Calu3 (cell line): ENCODE measurements at regions of chr20 and their contacts with region 1.

Region 1: DNA sequence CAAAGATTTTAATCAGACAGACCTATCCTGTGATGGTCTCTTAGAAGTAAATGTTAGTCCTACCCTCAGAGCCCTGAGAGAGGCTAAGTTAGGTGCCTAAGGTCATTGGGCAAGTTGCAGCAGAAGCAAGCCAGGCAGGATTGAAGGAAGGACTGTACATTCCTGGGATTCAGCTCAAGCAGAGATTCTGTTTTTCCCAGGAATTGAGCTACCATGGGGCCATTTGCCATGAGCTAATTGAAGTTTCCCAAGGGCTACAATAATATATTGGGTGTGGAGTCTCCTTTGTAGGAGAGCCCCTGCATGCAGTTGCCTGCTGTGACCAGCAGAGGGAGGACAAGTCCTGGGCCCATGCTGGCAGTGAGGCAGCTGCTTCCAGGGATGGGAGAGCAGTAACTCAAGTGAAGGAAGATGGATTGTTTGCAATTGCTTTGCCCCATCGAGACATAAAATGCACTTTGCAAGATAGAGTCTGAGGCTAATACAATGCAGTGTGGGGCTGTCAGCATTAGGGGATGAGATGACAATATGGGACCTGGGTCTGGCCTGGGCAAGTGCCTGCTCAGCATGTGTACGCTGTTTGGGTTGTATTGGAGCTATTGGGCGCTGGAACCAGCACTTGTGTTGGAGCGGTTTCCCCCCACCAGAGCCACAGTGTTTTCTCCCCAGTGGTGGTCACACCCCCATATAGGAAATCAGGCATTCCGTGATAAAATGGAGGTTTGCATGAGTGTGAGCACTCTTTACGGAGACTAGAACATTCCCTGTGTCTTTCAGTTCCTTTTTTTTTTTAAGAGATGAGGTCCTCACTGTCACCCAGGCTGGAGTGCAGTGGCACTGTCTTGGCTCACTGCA is 27.9 kb downstream of the DNMT3B start:
- DNase-seq: peak; percentile 90
- H3K4me3 Mint-ChIP-seq: no peak overlapping the region
- H3K27ac Mint-ChIP-seq: no peak overlapping the region
- H3K4me1 Mint-ChIP-seq: peaks cover 8% of the 10 kb centered on the region
- H3K27me3 Mint-ChIP-seq: no peaks in the 10 kb centered on the region
- CTCF ChIP-seq: peak; percentile 100

Region 2: DNA sequence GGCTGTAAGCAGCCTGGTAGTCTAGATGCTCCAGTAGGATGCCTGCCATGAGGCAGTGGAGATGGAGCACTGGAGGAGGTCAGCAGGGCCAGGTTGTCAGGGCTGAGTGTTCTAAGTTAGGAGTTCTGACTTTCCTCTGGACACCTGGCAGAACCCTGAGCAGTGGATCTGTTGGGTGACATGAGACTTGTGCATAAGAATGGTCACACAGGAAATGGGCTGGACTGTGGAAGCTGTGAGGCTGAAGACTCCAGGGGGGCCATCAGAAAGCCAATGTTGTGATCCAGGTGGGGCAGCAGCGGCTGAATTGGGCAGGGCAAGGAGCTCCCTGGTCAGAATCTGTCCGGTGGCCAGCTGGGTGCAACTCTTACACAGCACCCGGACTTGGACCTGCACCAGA is 92.5 kb before region 1 on chr20:
- CTCF ChIA-PET with region 1: interaction called, 12 read pairs
- intact Hi-C with region 1: no loop called
- DNase-seq: no peak
- H3K4me3 Mint-ChIP-seq: no peak overlapping the region
- H3K27ac Mint-ChIP-seq: no peak overlapping the region
- H3K4me1 Mint-ChIP-seq: no peaks in the 10 kb centered on the region
- H3K27me3 Mint-ChIP-seq: no peaks in the 10 kb centered on the region
- CTCF ChIP-seq: no peak

Region 3: DNA sequence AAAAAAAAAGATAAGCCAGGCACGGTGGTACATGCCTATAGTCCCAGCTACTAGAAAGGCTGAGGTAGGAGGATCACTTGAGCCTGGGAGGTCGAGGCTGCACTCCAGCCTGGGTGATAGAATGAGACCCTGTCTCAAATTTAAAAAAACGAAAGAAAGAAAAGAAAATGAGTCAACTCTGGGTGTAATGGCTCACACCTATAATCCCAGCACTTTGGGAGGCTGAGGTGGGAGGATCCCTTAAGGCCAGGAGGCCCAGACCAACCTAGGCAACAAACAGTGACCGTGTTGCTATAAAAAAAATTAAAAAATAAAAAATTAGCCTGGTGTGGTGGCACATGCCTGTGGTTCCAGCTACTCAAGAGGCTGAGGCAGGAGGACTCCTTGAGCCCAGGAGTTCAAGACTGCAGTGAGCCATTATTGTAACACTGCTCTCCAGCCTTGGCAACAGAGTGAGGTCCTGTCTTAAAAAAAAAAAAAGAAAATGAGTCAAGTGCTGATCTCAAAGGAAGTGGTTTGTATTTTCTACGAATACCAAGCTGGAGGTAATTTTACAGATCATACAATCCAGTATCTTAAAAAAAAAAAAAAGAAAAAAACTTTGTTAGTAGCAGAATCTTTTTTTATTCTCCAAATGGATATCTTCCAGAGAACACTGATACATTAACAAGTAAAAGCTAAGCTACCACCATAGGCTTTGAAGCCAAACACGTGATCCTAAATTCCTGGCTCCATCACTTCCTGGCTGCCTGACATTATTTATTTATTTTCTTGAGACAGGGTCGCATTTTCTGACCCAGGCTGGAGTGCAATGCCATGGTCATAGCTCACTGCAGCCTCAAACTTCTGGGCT is 52.5 kb before region 1 on chr20:
- CTCF ChIA-PET with region 1: no interaction called
- intact Hi-C with region 1: no loop called
- DNase-seq: no peak
- H3K4me3 Mint-ChIP-seq: no peak overlapping the region
- H3K27ac Mint-ChIP-seq: no peak overlapping the region
- H3K4me1 Mint-ChIP-seq: peaks cover 8% of the 10 kb centered on the region
- H3K27me3 Mint-ChIP-seq: no peaks in the 10 kb centered on the region
- CTCF ChIP-seq: no peak

Region 4: GRCh38 chr20:32819992-32820710 is 30.0 kb after region 1 on chr20:
- CTCF ChIA-PET with region 1: interaction called, 19 read pairs
- intact Hi-C with region 1: loop called (anchors 2 kb)
- DNase-seq: peak; percentile 82
- H3K4me3 Mint-ChIP-seq: peak overlapping the region; percentile 97
- H3K27ac Mint-ChIP-seq: peak overlapping the region; percentile 93
- H3K4me1 Mint-ChIP-seq: peaks cover 41% of the 10 kb centered on the region
- H3K27me3 Mint-ChIP-seq: no peaks in the 10 kb centered on the region
- CTCF ChIP-seq: no peak